ENCODE measurements at regions of chr5 and their contacts with region 1.

Region 1: DNA sequence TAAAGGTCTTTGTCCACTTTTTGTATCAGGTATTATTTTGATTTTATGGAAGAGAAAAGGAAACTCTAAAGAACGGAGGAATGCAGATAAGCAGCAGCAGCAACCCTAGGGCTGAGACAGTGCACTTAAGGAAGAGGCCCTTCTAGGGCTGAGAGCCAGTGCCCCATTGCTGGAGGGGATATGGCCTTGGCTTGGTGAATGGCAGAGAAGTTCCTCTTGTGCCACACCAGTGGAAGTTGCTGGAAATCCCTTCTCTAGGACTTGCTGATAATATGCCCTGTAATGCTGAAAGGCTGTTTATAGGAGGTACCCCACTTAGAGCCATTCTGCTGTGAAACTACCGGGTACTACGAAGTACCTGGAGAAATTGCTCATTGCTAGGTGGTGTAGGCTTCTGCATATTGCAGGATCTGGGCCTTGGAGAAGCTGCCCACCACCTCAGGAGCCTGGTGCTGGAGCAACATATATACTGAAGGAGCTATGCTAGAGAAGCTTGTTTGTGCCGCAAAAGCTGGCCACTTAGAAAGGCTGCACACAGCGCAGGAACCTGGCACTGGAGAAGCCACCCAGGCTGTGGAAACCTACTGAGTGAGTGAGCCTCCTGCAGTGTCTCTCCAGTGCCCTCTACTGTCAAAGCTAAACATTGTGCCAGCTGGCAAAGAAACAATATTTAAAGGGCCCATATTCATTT is 9.6 kb upstream of the UBTD2 start:
- DNase-seq: peak; percentile 20 to 77 (median 67)
- ATAC-seq: peak; percentile 100
- H3K4me3 ChIP-seq: no peak overlapping the region
- H3K4me3 Mint-ChIP-seq: no peak overlapping the region
- H3K27ac ChIP-seq: no peak overlapping the region
- H3K27ac Mint-ChIP-seq: peak overlapping the region in 1 of 9 donors; percentile 43
- H3K4me1 ChIP-seq: no peaks in the 10 kb centered on the region
- H3K4me1 Mint-ChIP-seq: peaks cover 0 to 4% (median 2%) of the 10 kb centered on the region in 7 donors
- H3K27me3 ChIP-seq: no peaks in the 10 kb centered on the region
- H3K27me3 Mint-ChIP-seq: peaks cover 0 to 12% (median 0%) of the 10 kb centered on the region in 5 donors

Region 2: DNA sequence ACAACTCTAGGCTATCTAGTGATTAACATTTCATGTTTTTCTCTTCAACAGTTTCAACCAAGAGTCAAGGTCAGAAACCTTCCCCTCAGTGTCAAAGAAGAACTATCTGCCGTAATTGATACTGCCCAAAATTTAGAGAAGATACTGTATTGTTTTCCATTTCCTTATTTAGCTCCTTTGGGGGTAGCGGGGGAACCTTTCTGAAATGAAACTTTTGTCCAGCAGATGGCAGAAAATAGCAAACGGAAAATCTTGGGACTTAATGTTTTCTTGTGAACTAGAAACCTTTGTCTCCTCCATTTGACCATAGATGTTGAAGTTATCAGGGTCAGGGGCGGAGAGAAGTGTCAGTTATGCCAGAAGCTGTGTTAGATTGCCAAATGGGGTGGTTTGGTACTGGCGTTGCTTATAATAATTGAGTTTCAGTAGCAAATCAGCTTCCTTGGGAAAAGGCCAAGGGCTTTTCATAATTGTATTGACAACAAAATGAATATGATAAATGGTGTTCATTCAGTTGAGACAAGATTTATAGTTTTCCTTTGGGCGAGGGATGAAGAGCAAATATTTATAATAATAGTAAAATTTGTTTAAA is 1085.8 kb before region 1 on chr5:
- CTCF ChIA-PET with region 1: no interaction called
- POLR2A ChIA-PET with region 1: no interaction called
- intact Hi-C with region 1: loop called in 1 of 2 experiments (anchors 1 kb)
- DNase-seq: peak in 4 of 9 donors; percentile 5 to 18 (median 12)
- ATAC-seq: no peak
- H3K4me3 ChIP-seq: no peak overlapping the region
- H3K4me3 Mint-ChIP-seq: no peak overlapping the region
- H3K27ac ChIP-seq: no peak overlapping the region
- H3K27ac Mint-ChIP-seq: no peak overlapping the region
- H3K4me1 ChIP-seq: no peaks in the 10 kb centered on the region
- H3K4me1 Mint-ChIP-seq: no peaks in the 10 kb centered on the region
- H3K27me3 ChIP-seq: no peaks in the 10 kb centered on the region
- H3K27me3 Mint-ChIP-seq: peaks cover 5 to 16% (median 7%) of the 10 kb centered on the region in 5 donors

Region 3: GRCh38 chr5:171484460-171484899 is 808.7 kb before region 1 on chr5:
- CTCF ChIA-PET with region 1: no interaction called
- POLR2A ChIA-PET with region 1: no interaction called
- intact Hi-C with region 1: loop called in 1 of 2 experiments (anchors 1 kb)
- DNase-seq: peak in 7 of 9 donors; percentile 2 to 42 (median 17)
- ATAC-seq: peak; percentile 69
- H3K4me3 ChIP-seq: no peak overlapping the region
- H3K4me3 Mint-ChIP-seq: no peak overlapping the region
- H3K27ac ChIP-seq: no peak overlapping the region
- H3K27ac Mint-ChIP-seq: peak overlapping the region in 1 of 9 donors; percentile 41
- H3K4me1 ChIP-seq: peaks cover 0 to 3% of the 10 kb centered on the region in 2 donors
- H3K4me1 Mint-ChIP-seq: peaks cover 0 to 8% (median 0%) of the 10 kb centered on the region in 7 donors
- H3K27me3 ChIP-seq: no peaks in the 10 kb centered on the region
- H3K27me3 Mint-ChIP-seq: peaks cover 3 to 15% (median 9%) of the 10 kb centered on the region in 5 donors

Region 4: DNA sequence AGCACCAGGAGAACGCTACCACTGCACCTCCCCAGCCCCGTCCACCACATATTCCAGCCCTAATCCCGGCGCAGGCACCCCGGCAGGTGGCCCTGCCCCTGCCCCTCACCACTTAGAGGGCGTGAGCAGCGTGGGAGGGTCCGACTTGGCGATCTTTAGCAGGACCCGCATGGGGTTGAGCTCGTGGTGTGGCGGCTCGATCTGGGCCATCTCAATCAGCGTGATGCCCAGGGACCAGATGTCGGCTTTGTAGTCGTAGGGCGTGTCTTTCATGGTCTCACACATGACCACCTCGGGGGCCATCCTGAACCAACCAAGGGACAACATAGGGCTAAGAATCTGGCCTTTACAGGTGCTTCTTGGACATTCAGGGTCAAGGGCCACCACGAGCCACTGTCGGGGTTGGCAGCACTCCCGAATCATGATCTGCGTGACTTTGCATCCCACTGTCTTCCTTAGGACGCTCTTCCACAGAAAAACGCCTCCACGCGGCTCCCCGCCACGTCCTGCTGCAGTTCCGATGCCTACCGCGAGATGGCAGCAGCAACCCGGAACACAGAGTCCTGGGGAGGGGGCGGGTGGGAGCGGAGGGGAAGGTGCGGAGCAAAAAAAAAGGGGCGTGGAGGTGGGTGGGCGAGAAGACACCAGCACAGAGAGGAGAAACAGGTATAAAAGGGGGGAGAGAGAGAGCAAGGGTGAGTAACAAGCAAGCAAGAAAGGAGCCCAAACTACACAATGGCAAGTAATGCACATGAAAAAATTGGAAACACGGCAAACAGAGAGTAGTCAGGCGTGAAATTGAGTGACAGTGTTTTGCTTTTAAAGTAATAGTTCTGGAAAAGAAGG is 186.5 kb before region 1 on chr5:
- CTCF ChIA-PET with region 1: interaction called, 5 read pairs
- POLR2A ChIA-PET with region 1: no interaction called
- intact Hi-C with region 1: loop called (anchors 1 kb)
- DNase-seq: peak; percentile 31 to 78 (median 59)
- ATAC-seq: peak; percentile 43
- H3K4me3 ChIP-seq: no peak overlapping the region
- H3K4me3 Mint-ChIP-seq: peak overlapping the region in 8 of 10 donors; percentile 20 to 49 (median 39)
- H3K27ac ChIP-seq: peak overlapping the region; percentile 24
- H3K27ac Mint-ChIP-seq: peak overlapping the region; percentile 18 to 88 (median 81)
- H3K4me1 ChIP-seq: peaks cover 31 to 37% of the 10 kb centered on the region in 2 donors
- H3K4me1 Mint-ChIP-seq: peaks cover 23 to 61% (median 43%) of the 10 kb centered on the region in 7 donors
- H3K27me3 ChIP-seq: no peaks in the 10 kb centered on the region
- H3K27me3 Mint-ChIP-seq: no peaks in the 10 kb centered on the region

Region 5: GRCh38 chr5:172659909-172660628 is 366.9 kb after region 1 on chr5:
- CTCF ChIA-PET with region 1: no interaction called
- POLR2A ChIA-PET with region 1: no interaction called
- intact Hi-C with region 1: no loop called
- DNase-seq: no peak
- ATAC-seq: peak; percentile 76
- H3K4me3 ChIP-seq: no peak overlapping the region
- H3K4me3 Mint-ChIP-seq: no peak overlapping the region
- H3K27ac ChIP-seq: no peak overlapping the region
- H3K27ac Mint-ChIP-seq: no peak overlapping the region
- H3K4me1 ChIP-seq: no peaks in the 10 kb centered on the region
- H3K4me1 Mint-ChIP-seq: peaks cover 0 to 3% (median 0%) of the 10 kb centered on the region in 7 donors
- H3K27me3 ChIP-seq: no peaks in the 10 kb centered on the region
- H3K27me3 Mint-ChIP-seq: peaks cover 0 to 4% (median 0%) of the 10 kb centered on the region in 5 donors